Ovary (tissue), 10 donors: ENCODE measurements at regions of chr10 and their contacts with region 1.

Region 1: GRCh38 chr10:96390460-96390864 is 31.7 kb upstream of the OPALIN start:
- DNase-seq: no peak
- H3K4me3 ChIP-seq: no peak overlapping the region
- H3K27ac ChIP-seq: no peak overlapping the region
- H3K4me1 ChIP-seq: no peaks in the 10 kb centered on the region
- H3K27me3 ChIP-seq: no peaks in the 10 kb centered on the region
- CTCF ChIP-seq: no peak
- EP300 ChIP-seq: no peak
- POLR2A ChIP-seq: no peak

Region 2: GRCh38 chr10:95693668-95694534 is 696.6 kb before region 1 on chr10 and contains the start of gene TCTN3:
- intact Hi-C with region 1: no loop called
- DNase-seq: peak; percentile 94 to 97 (median 95)
- H3K4me3 ChIP-seq: peak within 1 kb of the TSS; percentile 71
- H3K27ac ChIP-seq: peak within 1 kb of the TSS; percentile 81 to 82
- H3K4me1 ChIP-seq: no peaks in the 10 kb centered on the region
- H3K27me3 ChIP-seq: no peaks in the 10 kb centered on the region
- CTCF ChIP-seq: peak; percentile 98 to 100 (median 99)
- EP300 ChIP-seq: no peak
- POLR2A ChIP-seq: peak; percentile 77
- total RNA-seq, gene TCTN3: 24.1 to 44.7 (median 34.2) TPM

Region 3: GRCh38 chr10:96513698-96514561 is 123.5 kb after region 1 on chr10 and contains the start of gene TLL2:
- intact Hi-C with region 1: loop called (anchors 5 to 10 kb)
- DNase-seq: peak; percentile 65 to 87 (median 78)
- H3K4me3 ChIP-seq: peak within 1 kb of the TSS; percentile 41
- H3K27ac ChIP-seq: no peak within 1 kb of the TSS
- H3K4me1 ChIP-seq: peaks cover 10% of the 10 kb centered on the region
- H3K27me3 ChIP-seq: no peaks in the 10 kb centered on the region
- CTCF ChIP-seq: peak; percentile 43 to 77 (median 50)
- EP300 ChIP-seq: no peak
- POLR2A ChIP-seq: no peak
- total RNA-seq, gene TLL2: 0.07 to 0.46 (median 0.25) TPM in 6 of 7 donors, not detected in the other